Activated B cell treated with CpG ODN at 0.5 μM for 24 hours (primary cell): ENCODE measurements at regions of chr2 and their contacts with region 1.

Region 1: DNA sequence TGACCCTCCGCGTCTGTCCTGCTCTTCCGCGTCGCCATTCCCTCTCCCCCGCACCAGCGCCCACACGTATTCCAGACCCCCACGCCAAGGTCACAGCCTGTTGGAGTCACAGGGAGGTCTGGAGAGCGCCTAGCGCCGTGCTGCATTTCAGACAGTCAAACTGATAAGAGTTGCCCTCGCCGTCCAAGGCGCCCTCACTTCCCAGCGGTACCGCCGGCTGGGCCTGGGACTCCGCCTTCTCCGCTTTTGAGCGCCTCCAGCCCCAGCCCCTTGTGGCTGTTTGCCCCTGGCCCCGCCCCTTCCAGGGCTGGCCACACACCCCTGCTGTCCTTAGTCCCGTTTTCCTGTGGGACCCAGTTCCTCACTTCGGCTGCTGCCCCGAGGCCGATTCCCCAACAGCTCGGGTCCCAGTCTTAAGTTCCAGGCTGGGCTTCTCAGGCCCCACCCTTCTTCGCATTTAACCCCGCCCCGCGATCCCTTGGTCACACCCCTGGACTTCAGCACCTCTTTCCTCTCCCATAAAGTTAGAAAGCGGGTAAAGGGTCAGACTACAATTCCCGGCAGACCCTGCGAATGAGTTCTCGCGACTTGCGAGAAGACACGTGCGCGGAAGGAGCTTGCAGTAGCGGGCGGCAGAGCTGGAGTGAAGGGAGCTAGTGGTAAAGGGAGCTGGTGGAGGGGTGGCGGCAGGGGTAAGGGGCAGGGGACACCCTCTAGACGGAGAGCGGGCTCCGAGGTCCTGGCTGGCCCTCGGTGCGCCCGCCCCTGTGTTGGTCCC is at the start of gene GMPPA:
- DNase-seq: peak; percentile 86
- ATAC-seq: peak; percentile 94
- H3K4me3 Mint-ChIP-seq: peak within 1 kb of the TSS; percentile 98
- H3K27ac Mint-ChIP-seq: peak within 1 kb of the TSS; percentile 86
- H3K4me1 Mint-ChIP-seq: peaks cover 34% of the 10 kb centered on the region
- H3K27me3 Mint-ChIP-seq: peaks cover 28% of the 10 kb centered on the region
- CTCF ChIP-seq: no peak
- total RNA-seq, gene GMPPA: 32.9 and 33.0 TPM in 2 replicates

Region 2: GRCh38 chr2:219484343-219485200 is 13.9 kb before region 1 on chr2:
- CTCF ChIA-PET with region 1: no interaction called
- POLR2A ChIA-PET with region 1: no interaction called
- intact Hi-C with region 1: loop called (anchors 1 kb)
- DNase-seq: no peak
- ATAC-seq: no peak
- H3K4me3 Mint-ChIP-seq: peak overlapping the region; percentile 58
- H3K27ac Mint-ChIP-seq: no peak overlapping the region
- H3K4me1 Mint-ChIP-seq: peaks cover 8% of the 10 kb centered on the region
- H3K27me3 Mint-ChIP-seq: peaks cover 48% of the 10 kb centered on the region
- CTCF ChIP-seq: no peak

Region 3: GRCh38 chr2:219509780-219510511 is 11.5 kb after region 1 on chr2:
- CTCF ChIA-PET with region 1: interaction called, 5 read pairs
- POLR2A ChIA-PET with region 1: interaction called, 7 read pairs
- intact Hi-C with region 1: loop called (anchors 1 kb)
- DNase-seq: peak; percentile 37
- ATAC-seq: peak; percentile 76
- H3K4me3 Mint-ChIP-seq: peak overlapping the region; percentile 38
- H3K27ac Mint-ChIP-seq: no peak overlapping the region
- H3K4me1 Mint-ChIP-seq: peaks cover 22% of the 10 kb centered on the region
- H3K27me3 Mint-ChIP-seq: peaks cover 49% of the 10 kb centered on the region
- CTCF ChIP-seq: no peak

Region 4: DNA sequence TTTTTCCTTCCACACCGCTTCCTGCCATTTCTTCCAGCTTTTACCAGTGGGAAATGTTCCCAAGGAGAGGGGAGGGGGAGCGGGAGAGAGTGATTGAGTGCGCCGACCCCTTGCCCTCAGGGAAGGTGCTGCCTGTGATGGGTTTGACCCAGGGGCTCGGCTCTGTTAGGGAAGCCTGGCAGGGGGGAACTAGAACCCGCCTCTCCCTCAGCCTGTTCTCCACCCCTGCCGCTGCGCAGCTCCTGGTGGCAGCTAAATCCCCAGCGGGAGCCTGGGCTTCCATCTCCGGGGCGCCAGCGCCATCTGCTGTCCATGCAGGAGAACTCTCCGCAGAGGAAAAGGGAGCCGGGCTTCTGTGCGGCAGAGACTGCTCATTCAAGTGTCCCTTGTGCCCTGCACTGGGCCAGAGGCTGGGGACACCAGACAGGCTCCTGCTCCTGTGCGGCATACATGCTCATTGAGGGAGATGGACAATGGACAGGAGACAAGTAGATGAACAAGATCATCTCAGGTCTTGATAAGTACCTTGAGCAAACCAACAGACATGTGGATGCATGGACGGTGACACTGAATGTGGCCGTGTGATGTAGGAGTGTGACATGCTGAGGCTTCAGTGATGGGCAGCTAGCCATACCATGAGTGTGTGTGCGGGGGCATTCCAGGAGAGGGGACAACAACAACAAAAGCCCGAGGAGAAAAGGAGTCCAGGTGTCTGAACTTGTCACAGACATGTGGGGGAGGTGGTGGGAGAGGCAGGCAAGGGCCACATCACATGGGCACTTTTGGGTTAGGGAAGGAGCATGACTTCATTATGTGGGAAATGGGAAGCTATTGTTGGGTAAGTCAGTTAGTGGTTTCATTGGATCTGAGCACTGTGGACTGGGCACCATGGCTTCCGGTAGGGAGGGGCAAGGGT is 31.8 kb after region 1 on chr2:
- CTCF ChIA-PET with region 1: interaction called, 63 read pairs
- POLR2A ChIA-PET with region 1: interaction called, 4 read pairs
- intact Hi-C with region 1: loop called (anchors 1 kb)
- DNase-seq: peak; percentile 73
- ATAC-seq: peak; percentile 97
- H3K4me3 Mint-ChIP-seq: no peak overlapping the region
- H3K27ac Mint-ChIP-seq: no peak overlapping the region
- H3K4me1 Mint-ChIP-seq: no peaks in the 10 kb centered on the region
- H3K27me3 Mint-ChIP-seq: peaks cover 60% of the 10 kb centered on the region
- CTCF ChIP-seq: peak; percentile 91

Region 5: GRCh38 chr2:219597552-219598307 is 99.3 kb after region 1 on chr2 and contains the start of gene STK11IP:
- CTCF ChIA-PET with region 1: interaction called, 3 read pairs
- POLR2A ChIA-PET with region 1: interaction called, 4 read pairs
- intact Hi-C with region 1: loop called (anchors 1 kb)
- DNase-seq: peak; percentile 83
- ATAC-seq: peak; percentile 91
- H3K4me3 Mint-ChIP-seq: peak within 1 kb of the TSS; percentile 96
- H3K27ac Mint-ChIP-seq: peak within 1 kb of the TSS; percentile 97
- H3K4me1 Mint-ChIP-seq: peaks cover 23% of the 10 kb centered on the region
- H3K27me3 Mint-ChIP-seq: peaks cover 13% of the 10 kb centered on the region
- CTCF ChIP-seq: no peak
- total RNA-seq, gene STK11IP: 43.3 and 53.6 TPM in 2 replicates

Region 6: GRCh38 chr2:219642465-219643080 is 144.1 kb after region 1 on chr2:
- CTCF ChIA-PET with region 1: interaction called, 3 read pairs
- POLR2A ChIA-PET with region 1: no interaction called
- intact Hi-C with region 1: loop called (anchors 2 kb)
- DNase-seq: peak; percentile 80
- ATAC-seq: peak; percentile 100
- H3K4me3 Mint-ChIP-seq: peak overlapping the region; percentile 13
- H3K27ac Mint-ChIP-seq: peak overlapping the region; percentile 13
- H3K4me1 Mint-ChIP-seq: peaks cover 15% of the 10 kb centered on the region
- H3K27me3 Mint-ChIP-seq: peaks cover 20% of the 10 kb centered on the region
- CTCF ChIP-seq: peak; percentile 77

Region 7: DNA sequence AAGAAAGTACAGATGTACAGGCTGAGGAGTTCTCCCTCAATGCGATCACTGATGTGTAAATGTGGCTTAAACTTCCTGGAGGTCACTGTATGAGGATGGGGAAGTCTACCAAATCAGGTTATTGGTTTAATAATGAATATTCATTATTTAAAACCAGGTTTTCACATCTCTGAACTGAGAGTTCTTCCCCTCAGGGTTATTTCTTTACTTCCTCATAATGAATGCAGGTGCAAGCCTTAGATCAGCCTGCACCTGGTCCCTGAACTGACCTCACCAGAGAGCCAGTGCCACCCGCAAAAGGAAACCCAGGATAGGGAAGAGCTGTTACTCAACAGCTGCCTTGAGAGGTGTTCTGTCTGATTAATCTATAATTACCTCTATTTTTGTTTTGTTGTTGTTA is 1704.7 kb after region 1 on chr2:
- CTCF ChIA-PET with region 1: no interaction called
- POLR2A ChIA-PET with region 1: no interaction called
- intact Hi-C with region 1: loop called (anchors 10 kb)
- DNase-seq: peak; percentile 31
- ATAC-seq: peak; percentile 92
- H3K4me3 Mint-ChIP-seq: peak overlapping the region; percentile 37
- H3K27ac Mint-ChIP-seq: peak overlapping the region; percentile 60
- H3K4me1 Mint-ChIP-seq: peaks cover 55% of the 10 kb centered on the region
- H3K27me3 Mint-ChIP-seq: no peaks in the 10 kb centered on the region
- CTCF ChIP-seq: no peak